HepG2 (cell line): ENCODE measurements at regions of chr2 and their contacts with region 1.

Region 1: DNA sequence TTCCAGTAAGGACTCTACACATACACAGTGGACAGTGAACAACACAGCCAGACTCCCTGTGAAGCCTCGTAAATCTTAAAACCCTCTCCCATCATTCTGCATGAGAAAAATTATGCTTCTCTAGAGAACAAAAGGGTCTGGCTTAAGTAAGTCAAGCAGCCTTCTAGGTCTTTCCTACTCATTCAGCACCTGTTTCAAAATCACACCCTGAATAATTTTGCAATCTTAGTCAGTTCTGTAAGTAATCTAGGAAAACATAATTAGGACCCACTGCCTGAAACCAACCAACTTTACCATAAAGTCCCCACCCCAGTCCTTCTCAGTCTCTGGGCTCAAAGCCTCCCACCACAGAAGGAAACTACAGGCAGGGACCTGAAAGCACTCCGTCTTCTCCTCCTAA is 19.7 kb downstream of the IAH1 start:
- DNase-seq: no peak
- ATAC-seq: no peak
- H3K4me3 ChIP-seq: no peak overlapping the region
- H3K27ac ChIP-seq: no peak overlapping the region
- H3K4me1 ChIP-seq: peaks cover 21% of the 10 kb centered on the region
- H3K27me3 ChIP-seq: no peaks in the 10 kb centered on the region
- CTCF ChIP-seq: no peak
- EP300 ChIP-seq: no peak
- POLR2A ChIP-seq: no peak
- RAD21 ChIP-seq: no peak

Region 2: GRCh38 chr2:8563814-8564474 is 930.2 kb before region 1 on chr2:
- CTCF ChIA-PET with region 1: no interaction called
- POLR2A ChIA-PET with region 1: no interaction called
- in situ Hi-C with region 1: no loop called
- intact Hi-C with region 1: no loop called
- DNase-seq: no peak
- ATAC-seq: no peak
- H3K4me3 ChIP-seq: no peak overlapping the region
- H3K27ac ChIP-seq: no peak overlapping the region
- H3K4me1 ChIP-seq: no peaks in the 10 kb centered on the region
- H3K27me3 ChIP-seq: peaks cover 2 to 20% of the 10 kb centered on the region in 2 experiments; a peak in 4 of 5 replicates
- CTCF ChIP-seq: no peak
- EP300 ChIP-seq: no peak
- POLR2A ChIP-seq: no peak
- RAD21 ChIP-seq: no peak

Region 3: DNA sequence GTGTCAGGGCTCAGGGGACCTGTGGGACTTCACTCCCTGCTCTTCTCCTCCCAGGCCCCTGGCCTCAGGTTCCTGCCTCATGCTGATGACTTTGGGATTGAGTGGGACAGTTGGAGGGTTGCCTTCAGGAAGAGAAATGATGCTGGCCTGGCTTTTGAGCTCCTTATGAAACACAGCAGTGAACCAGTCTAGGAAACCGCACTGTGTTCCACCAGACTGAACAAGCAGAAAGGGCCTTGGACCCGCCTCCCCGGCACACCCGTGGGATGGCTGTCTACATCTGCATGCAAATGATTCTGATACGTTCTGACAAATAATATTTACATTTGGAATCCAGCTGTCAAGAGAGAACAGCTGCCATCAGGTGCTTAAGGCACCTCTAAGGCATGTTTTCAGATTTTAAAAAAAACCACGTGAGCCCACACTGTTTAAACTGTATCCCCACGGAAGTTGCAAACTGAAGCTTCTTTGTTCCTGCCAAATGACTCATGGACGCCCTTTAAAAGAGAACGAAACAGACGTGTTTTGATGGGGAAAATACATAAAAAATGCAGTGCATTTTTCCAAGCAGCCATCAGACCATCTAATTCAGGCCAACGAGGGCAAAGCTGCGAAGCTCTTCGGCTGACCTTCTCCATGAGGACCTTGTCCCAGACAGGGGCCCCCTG is 315.1 kb before region 1 on chr2:
- CTCF ChIA-PET with region 1: no interaction called
- POLR2A ChIA-PET with region 1: no interaction called
- in situ Hi-C with region 1: no loop called
- intact Hi-C with region 1: no loop called
- DNase-seq: peak; percentile 93
- ATAC-seq: peak; percentile 86
- H3K4me3 ChIP-seq: peak overlapping the region in 1 of 3 experiments; percentile 2; a peak in 2 of 6 replicates
- H3K27ac ChIP-seq: peak overlapping the region; percentile 43
- H3K4me1 ChIP-seq: peaks cover 41% of the 10 kb centered on the region
- H3K27me3 ChIP-seq: peaks cover 2 to 24% of the 10 kb centered on the region in 2 experiments; a peak in 4 of 5 replicates
- CTCF ChIP-seq: no peak
- EP300 ChIP-seq: peak in 1 of 2 experiments; percentile 60; a peak in 1 of 4 replicates
- POLR2A ChIP-seq: no peak
- RAD21 ChIP-seq: no peak

Region 4: DNA sequence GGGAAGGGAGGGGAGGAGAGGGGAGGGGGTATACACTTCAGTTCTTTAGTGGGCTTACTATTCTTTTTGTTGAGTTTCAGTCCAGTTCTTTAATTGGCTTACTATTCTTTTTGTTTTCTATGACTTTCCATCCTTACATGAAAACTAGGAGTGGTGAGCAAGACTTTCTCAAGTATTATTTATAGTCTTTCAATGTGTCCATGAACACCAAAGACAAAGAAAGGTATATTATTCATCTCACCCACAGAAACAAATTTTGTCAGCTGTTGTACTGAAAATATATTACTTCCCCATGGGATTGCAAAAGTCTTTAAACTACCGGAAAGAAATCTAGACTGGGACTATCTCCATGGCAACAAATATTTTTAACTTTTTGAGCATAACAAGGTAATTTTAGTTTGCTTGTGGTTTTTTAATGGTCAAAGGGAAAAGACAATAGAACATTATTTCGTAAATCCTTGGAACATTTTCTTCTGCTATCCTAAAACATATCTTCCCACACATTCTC is 44.0 kb after region 1 on chr2:
- CTCF ChIA-PET with region 1: no interaction called
- POLR2A ChIA-PET with region 1: no interaction called
- in situ Hi-C with region 1: no loop called
- intact Hi-C with region 1: loop called (anchors 5 kb)
- DNase-seq: no peak
- ATAC-seq: no peak
- H3K4me3 ChIP-seq: no peak overlapping the region
- H3K27ac ChIP-seq: no peak overlapping the region
- H3K4me1 ChIP-seq: peaks cover 17% of the 10 kb centered on the region
- H3K27me3 ChIP-seq: no peaks in the 10 kb centered on the region
- CTCF ChIP-seq: no peak
- EP300 ChIP-seq: no peak
- POLR2A ChIP-seq: no peak
- RAD21 ChIP-seq: no peak

Region 5: GRCh38 chr2:9748577-9748976 is 254.5 kb after region 1 on chr2:
- CTCF ChIA-PET with region 1: no interaction called
- POLR2A ChIA-PET with region 1: no interaction called
- in situ Hi-C with region 1: no loop called
- intact Hi-C with region 1: no loop called
- DNase-seq: no peak
- ATAC-seq: no peak
- H3K4me3 ChIP-seq: no peak overlapping the region
- H3K27ac ChIP-seq: no peak overlapping the region
- H3K4me1 ChIP-seq: peaks cover 16% of the 10 kb centered on the region
- H3K27me3 ChIP-seq: peaks cover 5 to 64% of the 10 kb centered on the region in 2 experiments
- CTCF ChIP-seq: no peak
- EP300 ChIP-seq: no peak
- POLR2A ChIP-seq: no peak
- RAD21 ChIP-seq: no peak